ENCODE measurements at regions of chr15 and their contacts with region 1.

Region 1: GRCh38 chr15:34241372-34242330 is 16.8 kb downstream of the EMC4 start:
- DNase-seq: peak; percentile 15 to 53 (median 35)
- H3K4me3 ChIP-seq: no peak overlapping the region
- H3K4me3 Mint-ChIP-seq: no peak overlapping the region
- H3K27ac ChIP-seq: no peak overlapping the region
- H3K27ac Mint-ChIP-seq: no peak overlapping the region
- H3K4me1 ChIP-seq: no peaks in the 10 kb centered on the region
- H3K4me1 Mint-ChIP-seq: no peaks in the 10 kb centered on the region
- H3K27me3 ChIP-seq: no peaks in the 10 kb centered on the region
- H3K27me3 Mint-ChIP-seq: peaks cover 0 to 2% (median 0%) of the 10 kb centered on the region in 3 donors
- CTCF ChIP-seq: peak; percentile 88

Region 2: DNA sequence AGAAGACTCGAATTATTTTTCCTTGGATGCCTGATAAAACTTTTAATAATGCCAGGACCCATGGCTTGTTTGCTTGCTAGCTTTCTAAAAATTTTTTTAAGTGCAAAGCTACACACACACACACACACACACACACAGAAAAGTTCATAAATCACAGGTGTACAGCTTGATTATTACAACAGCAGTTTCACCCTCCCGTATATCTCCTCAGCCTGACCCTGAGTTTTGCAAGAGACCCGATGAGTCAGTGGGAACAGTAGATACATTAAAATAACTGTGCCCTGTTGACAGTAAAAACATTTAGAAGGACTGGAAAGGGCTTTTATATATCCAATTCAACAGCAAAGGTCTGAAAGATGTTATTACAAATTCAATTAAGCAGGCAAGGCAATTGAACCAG is 29.8 kb after region 1 on chr15:
- intact Hi-C with region 1: loop called in 1 of 2 experiments (anchors 2 kb)
- DNase-seq: no peak
- H3K4me3 ChIP-seq: no peak overlapping the region
- H3K4me3 Mint-ChIP-seq: no peak overlapping the region
- H3K27ac ChIP-seq: no peak overlapping the region
- H3K27ac Mint-ChIP-seq: peak overlapping the region in 4 of 7 donors; percentile 12 to 46 (median 28)
- H3K4me1 ChIP-seq: no peaks in the 10 kb centered on the region
- H3K4me1 Mint-ChIP-seq: no peaks in the 10 kb centered on the region
- H3K27me3 ChIP-seq: no peaks in the 10 kb centered on the region
- H3K27me3 Mint-ChIP-seq: peaks cover 0 to 2% (median 1%) of the 10 kb centered on the region in 3 donors
- CTCF ChIP-seq: no peak

Region 3: DNA sequence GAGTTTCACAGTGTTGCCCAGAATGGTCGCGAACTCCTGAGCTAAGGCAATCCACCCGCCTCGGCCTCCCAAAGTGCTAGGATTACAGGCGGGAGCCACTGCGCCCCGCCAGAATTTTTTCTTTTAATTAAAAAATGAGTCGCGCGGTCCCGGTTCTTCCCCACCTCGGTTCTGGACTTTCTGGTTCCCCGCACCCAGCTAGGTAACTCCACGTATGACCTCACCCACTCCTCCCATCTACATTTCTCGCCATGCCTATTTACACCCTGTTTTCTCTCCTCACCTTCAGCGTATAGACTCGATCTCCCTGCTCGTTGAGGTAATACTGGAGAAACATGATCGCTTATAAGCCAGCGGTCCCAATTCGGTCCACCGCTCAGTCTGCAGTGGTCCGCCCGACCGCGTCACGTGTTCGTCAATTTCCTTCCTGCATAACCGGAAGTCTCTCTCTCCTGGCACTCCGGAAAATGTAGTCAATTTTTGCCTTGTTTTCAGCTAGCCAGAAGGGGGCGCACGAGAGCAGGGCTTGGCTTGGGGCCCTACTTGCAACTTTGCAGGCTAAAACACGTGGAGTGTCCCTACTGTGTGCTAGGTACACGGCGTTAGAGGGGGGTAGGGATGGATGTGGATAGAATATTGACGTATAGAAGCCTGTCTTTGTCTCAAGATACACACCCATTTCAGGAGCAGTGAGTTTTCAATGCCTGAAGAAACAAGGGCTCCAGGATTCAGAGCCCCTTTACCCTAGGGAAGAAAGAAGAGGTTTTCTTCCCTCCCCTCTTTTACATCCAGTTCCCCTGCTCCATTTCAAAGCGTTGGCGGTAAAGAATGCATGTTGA is 101.3 kb after region 1 on chr15 and contains the starts of genes NOP10 and NUTM1:
- intact Hi-C with region 1: loop called in 1 of 2 experiments (anchors 5 kb)
- DNase-seq: peak; percentile 90 to 93 (median 91)
- H3K4me3 ChIP-seq: peak within 1 kb of the TSS; percentile 62 to 96 (median 96)
- H3K4me3 Mint-ChIP-seq: no peak within 1 kb of the TSS
- H3K27ac ChIP-seq: peak within 1 kb of the TSS; percentile 43 to 86
- H3K27ac Mint-ChIP-seq: peak within 1 kb of the TSS in 2 of 7 donors; percentile 26 to 84
- H3K4me1 ChIP-seq: peaks cover 26 to 29% of the 10 kb centered on the region in 2 donors
- H3K4me1 Mint-ChIP-seq: peaks cover 28% of the 10 kb centered on the region
- H3K27me3 ChIP-seq: no peaks in the 10 kb centered on the region
- H3K27me3 Mint-ChIP-seq: peaks cover 0 to 2% (median 2%) of the 10 kb centered on the region in 3 donors
- CTCF ChIP-seq: peak; percentile 95
- polyA plus RNA-seq, gene NOP10: 260 to 677 (median 586) TPM
- polyA plus RNA-seq, gene NUTM1: not detected